GM12878 (cell line): ENCODE measurements at regions of chr16 and their contacts with region 1.

Region 1: GRCh38 chr16:57507136-57508034 is 21.1 kb upstream of the DOK4 start:
- DNase-seq: no peak
- ATAC-seq: no peak
- H3K4me3 ChIP-seq: no peak overlapping the region
- H3K27ac ChIP-seq: no peak overlapping the region
- H3K4me1 ChIP-seq: no peaks in the 10 kb centered on the region
- H3K27me3 ChIP-seq: no peaks in the 10 kb centered on the region; a peak in 2 of 4 replicates
- CTCF ChIP-seq: no peak
- EP300 ChIP-seq: no peak
- POLR2A ChIP-seq: no peak
- RAD21 ChIP-seq: no peak

Region 2: GRCh38 chr16:57493767-57494166 is 13.6 kb before region 1 on chr16:
- CTCF ChIA-PET with region 1: interaction called, 3 read pairs
- POLR2A ChIA-PET with region 1: interaction called, 5 read pairs
- RAD21 ChIA-PET with region 1: no interaction called
- SMC1A ChIA-PET with region 1: no interaction called
- in situ Hi-C with region 1: no loop called
- intact Hi-C with region 1: loop called (anchors 2 kb)
- DNase-seq: no peak
- ATAC-seq: no peak
- H3K4me3 ChIP-seq: no peak overlapping the region
- H3K27ac ChIP-seq: no peak overlapping the region
- H3K4me1 ChIP-seq: no peaks in the 10 kb centered on the region
- H3K27me3 ChIP-seq: no peaks in the 10 kb centered on the region; a peak in 1 of 4 replicates
- CTCF ChIP-seq: no peak
- EP300 ChIP-seq: no peak
- POLR2A ChIP-seq: no peak
- RAD21 ChIP-seq: no peak

Region 3: DNA sequence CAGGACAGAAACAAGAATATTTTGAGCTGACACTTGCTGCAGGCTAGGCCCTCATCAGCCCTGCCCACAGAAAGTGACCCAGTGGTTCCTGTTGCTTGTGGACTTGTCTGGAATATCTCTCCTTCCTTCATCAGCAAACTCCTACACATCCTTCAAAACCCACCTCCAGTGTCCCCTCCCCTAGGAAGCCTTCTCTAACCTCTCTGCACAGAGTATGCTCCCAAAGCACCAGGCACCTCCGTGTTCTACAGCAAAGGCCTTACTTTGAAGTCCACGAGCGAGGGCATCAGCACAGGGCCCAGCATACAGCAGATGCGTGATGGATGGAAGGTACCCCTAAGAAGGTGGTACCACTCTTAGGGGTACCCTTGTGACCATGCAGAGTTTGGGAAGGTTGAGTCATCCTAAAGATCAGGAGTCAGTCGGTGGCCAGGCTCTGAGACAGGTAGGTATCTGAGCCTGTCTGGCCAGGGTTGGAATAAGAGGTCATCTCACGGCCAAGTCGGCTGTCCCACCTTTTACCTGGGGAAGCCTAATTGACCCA is 27.0 kb after region 1 on chr16:
- CTCF ChIA-PET with region 1: no interaction called
- POLR2A ChIA-PET with region 1: no interaction called
- RAD21 ChIA-PET with region 1: no interaction called
- SMC1A ChIA-PET with region 1: no interaction called
- in situ Hi-C with region 1: no loop called
- intact Hi-C with region 1: no loop called
- DNase-seq: no peak
- ATAC-seq: no peak
- H3K4me3 ChIP-seq: no peak overlapping the region
- H3K27ac ChIP-seq: no peak overlapping the region
- H3K4me1 ChIP-seq: peaks cover 63% of the 10 kb centered on the region
- H3K27me3 ChIP-seq: no peaks in the 10 kb centered on the region
- CTCF ChIP-seq: no peak
- EP300 ChIP-seq: no peak
- POLR2A ChIP-seq: no peak
- RAD21 ChIP-seq: no peak

Region 4: DNA sequence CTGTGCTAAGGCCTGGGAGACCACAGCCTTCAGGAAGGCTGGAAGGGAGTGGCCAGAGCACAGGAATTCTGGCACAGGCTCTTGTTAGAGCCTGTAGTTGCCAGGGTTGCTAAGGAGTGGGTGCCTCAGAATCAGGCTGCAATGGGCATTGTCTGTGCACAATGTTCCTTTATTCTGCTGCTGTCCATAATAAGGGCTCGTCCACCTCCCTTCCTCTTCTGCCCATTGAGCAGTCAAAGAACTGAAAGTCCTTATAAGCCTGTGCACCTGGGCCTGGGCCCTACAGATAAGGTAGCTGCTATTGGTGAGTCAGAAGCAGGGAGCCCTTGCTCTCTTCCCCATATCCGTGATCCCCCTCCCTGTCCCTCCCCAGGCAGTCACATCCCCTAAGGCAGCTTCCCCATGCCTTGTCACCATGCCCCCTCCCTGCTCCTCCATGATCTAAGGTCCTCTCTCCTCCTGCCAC is 469.0 kb after region 1 on chr16:
- CTCF ChIA-PET with region 1: no interaction called
- POLR2A ChIA-PET with region 1: no interaction called
- RAD21 ChIA-PET with region 1: no interaction called
- SMC1A ChIA-PET with region 1: no interaction called
- in situ Hi-C with region 1: no loop called
- intact Hi-C with region 1: no loop called
- DNase-seq: no peak
- ATAC-seq: no peak; the same call in 2 of the 3 replicates
- H3K4me3 ChIP-seq: no peak overlapping the region
- H3K27ac ChIP-seq: no peak overlapping the region
- H3K4me1 ChIP-seq: no peaks in the 10 kb centered on the region
- H3K27me3 ChIP-seq: peaks cover 0 to 3% of the 10 kb centered on the region in 2 experiments; a peak in 2 of 4 replicates
- CTCF ChIP-seq: no peak
- EP300 ChIP-seq: no peak
- POLR2A ChIP-seq: no peak
- RAD21 ChIP-seq: no peak